ENCODE measurements at regions of chr1 and their contacts with region 1.

Region 1: GRCh38 chr1:171468120-171469035 is 17.0 kb upstream of the PRRC2C start:
- DNase-seq: no peak
- H3K4me3 ChIP-seq: no peak overlapping the region
- H3K27ac ChIP-seq: peak overlapping the region; percentile 81 to 83
- H3K4me1 ChIP-seq: peaks cover 0 to 3% of the 10 kb centered on the region in 2 donors
- H3K27me3 ChIP-seq: no peaks in the 10 kb centered on the region
- CTCF ChIP-seq: no peak

Region 2: GRCh38 chr1:171267391-171267790 is 201.0 kb before region 1 on chr1:
- intact Hi-C with region 1: no loop called
- DNase-seq: no peak
- H3K4me3 ChIP-seq: no peak overlapping the region
- H3K27ac ChIP-seq: no peak overlapping the region
- H3K4me1 ChIP-seq: no peaks in the 10 kb centered on the region
- H3K27me3 ChIP-seq: no peaks in the 10 kb centered on the region
- CTCF ChIP-seq: no peak

Region 3: DNA sequence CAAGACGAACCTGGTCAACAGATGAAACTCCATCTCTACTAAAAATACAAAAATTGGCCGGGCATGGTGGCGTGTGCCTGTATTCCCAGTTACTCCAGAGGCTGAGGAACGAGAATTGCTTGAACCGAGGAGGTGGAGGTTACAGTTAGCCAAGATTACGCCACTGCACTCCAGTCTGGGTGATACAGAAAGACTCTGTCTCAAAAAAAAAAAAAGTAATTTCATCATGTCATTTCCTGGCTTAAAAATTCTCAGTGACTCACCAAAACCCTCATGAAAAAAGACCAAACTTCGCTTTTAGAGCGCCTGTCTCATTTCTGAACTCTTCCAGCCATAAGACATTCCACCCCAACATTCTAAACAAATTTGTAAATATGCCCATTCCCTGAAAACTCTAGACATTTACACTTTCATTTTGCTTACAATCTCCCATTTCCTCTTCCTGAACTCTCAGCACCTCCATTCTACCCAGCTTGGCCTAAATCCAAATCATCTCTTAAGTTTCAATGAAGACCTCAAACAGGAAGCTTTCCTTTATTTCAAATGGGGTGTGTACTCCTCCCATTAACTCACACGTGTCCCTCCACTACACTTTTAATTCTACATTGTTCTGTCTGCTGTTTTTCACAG is 33.5 kb before region 1 on chr1:
- intact Hi-C with region 1: loop called (anchors 5 kb)
- DNase-seq: peak; percentile 16 to 90
- H3K4me3 ChIP-seq: peak overlapping the region; percentile 5 to 35
- H3K27ac ChIP-seq: peak overlapping the region; percentile 87
- H3K4me1 ChIP-seq: peaks cover 4 to 18% of the 10 kb centered on the region in 2 donors
- H3K27me3 ChIP-seq: no peaks in the 10 kb centered on the region
- CTCF ChIP-seq: no peak

Region 4: DNA sequence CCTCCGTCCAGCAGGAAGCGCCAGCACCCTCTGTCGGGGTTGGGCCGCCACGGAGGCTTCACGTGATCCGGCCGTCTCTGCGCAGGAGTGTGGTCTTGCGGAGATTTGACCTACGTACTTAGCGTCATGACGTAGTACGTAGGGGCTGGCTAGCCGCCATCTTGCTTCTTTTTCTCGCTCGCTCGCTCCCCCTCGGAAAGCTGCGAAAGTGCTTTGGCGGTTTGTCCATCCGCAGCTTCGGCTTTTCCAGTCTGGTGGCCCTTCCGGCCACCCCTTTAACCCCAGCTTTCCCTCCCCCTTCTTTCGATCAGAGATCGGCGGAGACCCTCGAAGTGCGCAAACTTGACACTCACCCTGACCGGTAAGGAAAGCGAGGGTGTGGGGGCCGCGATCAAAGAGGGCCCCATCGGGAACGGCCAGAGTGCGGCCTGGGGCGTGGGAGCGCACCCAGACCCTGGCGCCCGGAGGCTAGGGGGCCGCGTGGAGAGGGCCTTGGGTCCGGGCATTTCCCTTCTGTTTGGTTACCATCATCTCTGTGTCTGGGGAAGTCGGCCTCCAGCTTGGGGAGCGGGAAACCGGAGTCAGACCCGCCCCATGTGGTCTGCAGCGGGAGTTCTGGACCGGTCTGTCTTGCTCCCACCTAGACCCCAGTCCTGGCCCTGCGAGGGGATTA is 17.1 kb after region 1 on chr1 and contains the start of gene PRRC2C:
- intact Hi-C with region 1: loop called (anchors 2 kb)
- DNase-seq: peak; percentile 88 to 99
- H3K4me3 ChIP-seq: peak within 1 kb of the TSS; percentile 75 to 91
- H3K27ac ChIP-seq: peak within 1 kb of the TSS; percentile 97 to 100
- H3K4me1 ChIP-seq: peaks cover 3 to 19% of the 10 kb centered on the region in 2 donors
- H3K27me3 ChIP-seq: no peaks in the 10 kb centered on the region
- CTCF ChIP-seq: peak in 2 of 3 experiments; percentile 83 to 89
- total RNA-seq, gene PRRC2C: 46.3 TPM

Region 5: DNA sequence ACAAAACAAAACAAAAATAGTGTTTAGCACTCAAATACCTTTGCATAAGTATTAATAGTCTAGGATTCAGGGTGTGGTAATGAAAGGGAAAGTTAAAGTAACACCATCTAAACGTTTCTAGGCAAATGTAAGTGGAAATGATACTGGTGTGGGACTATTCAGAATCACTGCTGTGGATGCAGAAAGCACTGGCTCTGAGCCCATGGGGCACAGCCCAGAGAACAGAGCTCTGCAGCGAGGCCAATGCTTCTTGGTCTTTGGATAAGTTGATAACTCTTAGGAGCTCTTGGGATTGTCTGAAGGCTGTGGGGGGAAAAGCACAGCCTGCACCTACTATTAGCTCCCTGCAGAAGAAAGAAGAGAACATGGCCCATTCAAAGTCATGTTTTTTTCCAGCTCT is 351.6 kb after region 1 on chr1:
- intact Hi-C with region 1: no loop called
- DNase-seq: no peak
- H3K4me3 ChIP-seq: no peak overlapping the region
- H3K27ac ChIP-seq: no peak overlapping the region
- H3K4me1 ChIP-seq: no peaks in the 10 kb centered on the region
- H3K27me3 ChIP-seq: no peaks in the 10 kb centered on the region
- CTCF ChIP-seq: no peak